ENCODE measurements at regions of chr11 and their contacts with region 1.

Region 1: DNA sequence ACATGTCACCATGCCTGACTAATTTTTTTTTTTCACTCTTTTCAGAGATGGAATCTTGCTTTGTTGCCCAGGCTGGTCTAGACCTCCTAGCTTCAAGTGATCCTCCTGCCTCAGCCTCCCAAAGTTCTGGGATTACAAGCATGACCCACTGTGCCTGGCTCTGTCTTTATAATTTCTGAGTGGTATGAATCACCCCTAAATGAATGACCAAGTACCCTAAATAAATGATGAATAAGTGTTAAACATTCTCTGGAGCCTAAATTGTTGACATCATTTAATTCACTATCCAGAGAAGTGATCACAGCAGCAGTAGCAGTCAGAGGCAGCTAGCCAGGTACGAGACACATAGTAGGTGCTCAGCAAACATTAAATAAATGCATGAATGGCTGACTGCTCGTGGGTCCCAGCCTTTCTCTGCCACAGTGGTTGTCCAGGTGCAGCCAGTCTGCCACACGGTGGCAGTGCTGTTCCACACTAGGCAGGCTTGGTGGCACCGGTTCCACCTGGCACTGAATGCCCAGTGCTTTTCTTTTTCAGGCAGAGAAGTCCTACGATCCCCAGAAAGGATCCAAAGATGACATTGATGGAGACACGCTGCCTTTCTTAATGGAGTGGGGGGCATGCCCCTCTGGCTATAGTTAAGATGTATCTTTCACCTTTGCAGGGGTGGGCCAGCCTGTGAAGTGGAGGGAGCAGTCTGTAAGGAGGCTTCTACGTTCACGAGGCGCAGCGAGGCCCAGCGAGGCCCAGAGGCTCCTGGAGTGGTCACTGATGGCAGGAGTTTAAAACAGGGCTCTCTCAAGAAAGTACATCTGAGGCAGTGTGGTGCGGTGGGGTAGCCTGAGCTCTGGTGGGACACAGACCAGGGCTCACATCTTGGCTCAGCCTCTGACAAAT is 8.7 kb upstream of the TTC12 start:
- DNase-seq: peak; percentile 90
- H3K4me3 Mint-ChIP-seq: no peak overlapping the region
- H3K27ac Mint-ChIP-seq: no peak overlapping the region
- H3K4me1 Mint-ChIP-seq: no peaks in the 10 kb centered on the region
- H3K27me3 Mint-ChIP-seq: peaks cover 9% of the 10 kb centered on the region

Region 2: DNA sequence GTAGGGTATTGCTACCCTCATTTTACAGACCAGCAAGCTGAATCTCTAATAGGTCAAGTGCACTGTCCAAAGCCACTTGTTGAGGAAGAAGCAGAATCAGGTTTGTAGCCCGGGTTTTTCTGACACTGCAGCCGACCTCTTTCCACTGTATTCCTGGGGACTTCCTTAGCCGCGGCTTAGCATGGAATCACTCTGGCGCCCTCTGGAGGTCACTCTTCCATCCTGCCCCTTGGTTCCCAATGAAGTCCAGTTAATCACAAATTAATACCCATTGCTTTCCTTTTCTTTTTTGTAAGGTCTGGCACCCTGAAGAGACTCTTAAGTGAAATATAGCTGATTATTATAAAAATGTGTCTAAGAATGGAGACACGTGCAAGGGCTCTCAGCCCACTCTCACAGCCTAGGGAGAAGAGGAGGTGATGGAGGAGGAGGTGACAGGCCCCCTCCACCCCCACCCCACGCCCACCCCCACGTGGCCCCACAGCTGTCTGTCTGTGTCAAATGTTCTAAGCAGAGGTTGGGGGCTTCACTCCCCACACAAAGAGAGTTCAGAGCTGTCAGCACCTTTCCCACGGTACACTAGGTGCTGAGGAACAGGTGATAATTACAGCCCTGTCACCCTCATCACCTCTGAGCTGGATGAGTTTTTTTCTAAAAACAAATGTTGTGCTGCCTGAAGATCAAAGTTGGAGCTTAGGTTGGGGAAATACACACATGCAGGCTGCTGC is 227.2 kb after region 1 on chr11:
- intact Hi-C with region 1: loop called (anchors 1 kb)
- DNase-seq: peak; percentile 84
- H3K4me3 Mint-ChIP-seq: no peak overlapping the region
- H3K27ac Mint-ChIP-seq: no peak overlapping the region
- H3K4me1 Mint-ChIP-seq: no peaks in the 10 kb centered on the region
- H3K27me3 Mint-ChIP-seq: peaks cover 17% of the 10 kb centered on the region

Region 3: GRCh38 chr11:113730887-113731726 is 425.4 kb after region 1 on chr11:
- intact Hi-C with region 1: loop called (anchors 1 kb)
- DNase-seq: no peak
- H3K4me3 Mint-ChIP-seq: no peak overlapping the region
- H3K27ac Mint-ChIP-seq: no peak overlapping the region
- H3K4me1 Mint-ChIP-seq: peaks cover 2% of the 10 kb centered on the region
- H3K27me3 Mint-ChIP-seq: no peaks in the 10 kb centered on the region

Region 4: GRCh38 chr11:113796663-113797259 is 491.1 kb after region 1 on chr11:
- intact Hi-C with region 1: loop called (anchors 1 kb)
- DNase-seq: peak; percentile 68
- H3K4me3 Mint-ChIP-seq: no peak overlapping the region
- H3K27ac Mint-ChIP-seq: no peak overlapping the region
- H3K4me1 Mint-ChIP-seq: no peaks in the 10 kb centered on the region
- H3K27me3 Mint-ChIP-seq: no peaks in the 10 kb centered on the region